Mammary epithelial cell (primary cell): ENCODE measurements at regions of chr12 and their contacts with region 1.

Region 1: GRCh38 chr12:12032851-12033588 is 37.7 kb upstream of the BCL2L14 start:
- DNase-seq: peak; percentile 72
- H3K4me3 ChIP-seq: peak overlapping the region; percentile 11 to 33 (median 26)
- H3K27ac ChIP-seq: no peak overlapping the region
- H3K4me1 ChIP-seq: no peaks in the 10 kb centered on the region
- H3K27me3 ChIP-seq: no peaks in the 10 kb centered on the region
- CTCF ChIP-seq: peak; percentile 79 to 90

Region 2: DNA sequence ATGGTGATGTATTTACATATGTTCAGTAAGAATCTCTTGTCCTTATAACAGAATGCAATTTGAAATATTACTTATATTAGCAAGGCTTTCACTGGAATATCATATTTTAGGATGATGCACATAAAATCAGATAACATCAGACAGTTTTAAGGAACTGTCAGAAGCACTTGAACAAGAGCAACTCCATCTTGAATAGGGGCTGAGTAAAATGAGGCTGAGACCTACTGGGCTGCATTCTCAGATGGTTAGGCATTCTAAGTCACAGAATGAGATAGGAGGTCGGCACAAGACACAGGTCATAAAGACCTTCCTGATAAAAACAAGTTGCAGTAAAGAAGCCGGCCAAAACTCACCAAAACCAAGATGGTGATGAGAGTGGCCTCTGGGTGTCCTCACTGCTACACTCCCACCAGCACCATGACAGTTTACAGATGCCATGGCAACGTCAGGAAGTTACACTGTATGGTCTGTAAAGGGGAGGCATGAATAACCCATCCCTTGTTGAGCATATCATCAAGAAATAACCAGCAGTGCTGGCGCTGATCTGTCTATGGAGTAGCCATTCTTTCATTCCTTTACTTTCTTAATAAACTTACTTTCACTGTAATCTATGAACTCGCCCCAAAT is 411.1 kb before region 1 on chr12:
- CTCF ChIA-PET with region 1: no interaction called
- dilution Hi-C with region 1: no loop called
- in situ Hi-C with region 1: no loop called
- intact Hi-C with region 1: loop called (anchors 1 kb)
- DNase-seq: no peak
- H3K4me3 ChIP-seq: no peak overlapping the region
- H3K27ac ChIP-seq: no peak overlapping the region
- H3K4me1 ChIP-seq: no peaks in the 10 kb centered on the region
- H3K27me3 ChIP-seq: no peaks in the 10 kb centered on the region
- CTCF ChIP-seq: no peak

Region 3: DNA sequence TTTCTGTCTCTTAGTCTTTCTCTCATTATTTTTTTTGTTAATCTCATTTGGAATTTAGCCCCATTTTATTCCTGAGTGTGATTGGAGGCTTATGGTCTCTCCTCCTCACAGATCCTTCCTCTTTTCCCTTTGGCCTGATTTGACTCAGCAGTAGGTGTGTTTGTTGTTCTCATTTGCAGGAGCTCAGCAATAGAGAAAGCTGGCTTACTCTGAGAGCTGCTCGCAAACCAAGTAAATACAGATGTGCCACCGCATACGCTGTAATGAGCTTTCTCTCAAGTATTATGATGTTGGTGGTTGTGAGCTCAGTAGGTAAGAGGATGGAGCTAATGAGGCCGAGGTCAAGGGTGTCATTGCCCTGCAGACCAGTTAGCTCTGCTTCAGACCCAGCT is 177.0 kb before region 1 on chr12:
- CTCF ChIA-PET with region 1: no interaction called
- dilution Hi-C with region 1: no loop called
- in situ Hi-C with region 1: no loop called
- intact Hi-C with region 1: loop called (anchors 1 kb)
- DNase-seq: no peak
- H3K4me3 ChIP-seq: no peak overlapping the region
- H3K27ac ChIP-seq: no peak overlapping the region
- H3K4me1 ChIP-seq: peaks cover 29% of the 10 kb centered on the region
- H3K27me3 ChIP-seq: no peaks in the 10 kb centered on the region
- CTCF ChIP-seq: no peak

Region 4: GRCh38 chr12:11877869-11878780 is 154.9 kb before region 1 on chr12:
- CTCF ChIA-PET with region 1: no interaction called
- dilution Hi-C with region 1: no loop called
- in situ Hi-C with region 1: no loop called
- intact Hi-C with region 1: loop called (anchors 5 kb)
- DNase-seq: peak; percentile 92
- H3K4me3 ChIP-seq: peak overlapping the region in 1 of 3 experiments; percentile 7
- H3K27ac ChIP-seq: peak overlapping the region; percentile 80
- H3K4me1 ChIP-seq: peaks cover 55% of the 10 kb centered on the region
- H3K27me3 ChIP-seq: no peaks in the 10 kb centered on the region
- CTCF ChIP-seq: no peak

Region 5: DNA sequence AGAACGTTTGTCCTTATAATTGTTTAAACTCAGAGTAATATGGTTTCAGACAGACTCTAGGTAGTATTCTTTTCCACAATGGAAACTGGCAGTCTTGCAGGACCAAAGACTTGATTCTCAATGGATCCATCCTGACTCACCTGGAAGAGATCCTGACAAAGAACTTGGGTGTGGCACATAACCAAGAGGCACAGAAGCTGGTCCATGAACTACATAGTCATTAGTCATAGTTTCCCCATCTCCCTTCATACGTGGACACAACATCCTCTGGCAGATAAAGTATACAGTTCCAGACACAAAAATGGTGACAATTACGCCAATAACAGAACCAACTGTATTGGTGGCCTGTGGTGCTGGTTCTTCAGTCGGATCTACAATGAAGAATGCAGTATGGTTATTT is 93.5 kb after region 1 on chr12:
- CTCF ChIA-PET with region 1: no interaction called
- dilution Hi-C with region 1: loop called (anchors 5 kb)
- in situ Hi-C with region 1: no loop called
- intact Hi-C with region 1: no loop called
- DNase-seq: peak; percentile 84
- H3K4me3 ChIP-seq: no peak overlapping the region
- H3K27ac ChIP-seq: no peak overlapping the region
- H3K4me1 ChIP-seq: peaks cover 7% of the 10 kb centered on the region
- H3K27me3 ChIP-seq: no peaks in the 10 kb centered on the region
- CTCF ChIP-seq: no peak

Region 6: GRCh38 chr12:12334367-12335040 is 301.5 kb after region 1 on chr12:
- CTCF ChIA-PET with region 1: interaction called, 19 read pairs
- dilution Hi-C with region 1: no loop called
- in situ Hi-C with region 1: no loop called
- intact Hi-C with region 1: no loop called
- DNase-seq: peak; percentile 25
- H3K4me3 ChIP-seq: no peak overlapping the region
- H3K27ac ChIP-seq: no peak overlapping the region
- H3K4me1 ChIP-seq: peaks cover 26% of the 10 kb centered on the region
- H3K27me3 ChIP-seq: no peaks in the 10 kb centered on the region
- CTCF ChIP-seq: peak; percentile 80 to 81